Activated naive CD4-positive, alpha-beta T cell treated with anti-CD3 and anti-CD28 coated beads for 36 hours (primary cell): ENCODE measurements at regions of chr14 and their contacts with region 1.

Region 1: GRCh38 chr14:89720741-89721315 is 233.7 kb downstream of the EFCAB11 start:
- DNase-seq: peak; percentile 76
- H3K4me3 Mint-ChIP-seq: peak overlapping the region; percentile 32
- H3K27ac Mint-ChIP-seq: peak overlapping the region; percentile 95
- H3K4me1 Mint-ChIP-seq: peaks cover 68% of the 10 kb centered on the region
- H3K27me3 Mint-ChIP-seq: no peaks in the 10 kb centered on the region

Region 2: DNA sequence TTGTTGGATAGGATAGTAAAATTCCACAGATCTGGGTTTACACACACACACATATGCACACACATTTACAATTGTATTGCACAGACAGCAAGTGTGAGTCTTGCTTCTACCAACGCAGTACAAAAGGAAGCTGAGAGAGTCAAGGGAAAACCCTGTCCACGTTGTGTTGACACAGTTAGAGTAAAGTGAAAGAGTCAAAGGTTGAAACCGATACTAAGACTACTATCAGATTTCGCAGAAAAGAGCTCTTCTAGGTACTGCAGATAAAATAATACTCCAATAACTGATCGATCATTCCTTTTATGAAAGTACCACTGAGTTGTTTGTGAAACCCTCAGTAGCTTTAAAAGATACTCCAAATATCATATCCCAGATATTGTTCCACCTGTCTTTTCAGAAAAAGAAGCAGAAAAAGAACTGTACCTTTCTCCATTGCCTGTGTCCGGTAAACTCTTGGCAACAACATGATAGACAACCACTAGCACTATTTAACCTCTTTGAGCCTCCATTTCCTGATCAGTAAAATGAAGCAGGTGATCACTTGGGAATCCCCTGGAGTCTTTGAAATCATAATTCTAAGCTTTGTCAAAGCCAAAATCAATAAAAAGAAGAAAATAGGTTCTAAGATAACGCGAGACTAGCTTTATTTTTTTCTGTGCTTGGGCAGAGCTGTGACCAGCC is 79.2 kb before region 1 on chr14:
- CTCF ChIA-PET with region 1: no interaction called
- intact Hi-C with region 1: loop called (anchors 1 kb)
- DNase-seq: peak; percentile 61
- H3K4me3 Mint-ChIP-seq: peak overlapping the region; percentile 57
- H3K27ac Mint-ChIP-seq: peak overlapping the region; percentile 90
- H3K4me1 Mint-ChIP-seq: peaks cover 62% of the 10 kb centered on the region
- H3K27me3 Mint-ChIP-seq: no peaks in the 10 kb centered on the region

Region 3: GRCh38 chr14:89701211-89702043 is 19.4 kb before region 1 on chr14:
- CTCF ChIA-PET with region 1: interaction called, 3 read pairs
- intact Hi-C with region 1: loop called (anchors 1 kb)
- DNase-seq: peak; percentile 84
- H3K4me3 Mint-ChIP-seq: peak overlapping the region; percentile 78
- H3K27ac Mint-ChIP-seq: peak overlapping the region; percentile 74
- H3K4me1 Mint-ChIP-seq: peaks cover 34% of the 10 kb centered on the region
- H3K27me3 Mint-ChIP-seq: no peaks in the 10 kb centered on the region

Region 4: GRCh38 chr14:89750281-89750755 is 29.5 kb after region 1 on chr14:
- CTCF ChIA-PET with region 1: interaction called, 5 read pairs
- intact Hi-C with region 1: loop called (anchors 1 kb)
- DNase-seq: no peak
- H3K4me3 Mint-ChIP-seq: no peak overlapping the region
- H3K27ac Mint-ChIP-seq: no peak overlapping the region
- H3K4me1 Mint-ChIP-seq: peaks cover 26% of the 10 kb centered on the region
- H3K27me3 Mint-ChIP-seq: no peaks in the 10 kb centered on the region